ENCODE measurements at regions of chr2 and their contacts with region 1.

Region 1: GRCh38 chr2:203934041-203934492 is 2.5 kb upstream of the ICOS start:
- DNase-seq: peak; percentile 59
- H3K4me3 Mint-ChIP-seq: peak overlapping the region; percentile 61
- H3K27ac Mint-ChIP-seq: peak overlapping the region; percentile 87
- H3K4me1 Mint-ChIP-seq: peaks cover 44% of the 10 kb centered on the region
- H3K27me3 Mint-ChIP-seq: no peaks in the 10 kb centered on the region

Region 2: GRCh38 chr2:203730076-203730729 is 203.9 kb before region 1 on chr2:
- intact Hi-C with region 1: loop called (anchors 5 kb)
- DNase-seq: no peak
- H3K4me3 Mint-ChIP-seq: peak overlapping the region; percentile 1
- H3K27ac Mint-ChIP-seq: peak overlapping the region; percentile 83
- H3K4me1 Mint-ChIP-seq: peaks cover 75% of the 10 kb centered on the region
- H3K27me3 Mint-ChIP-seq: no peaks in the 10 kb centered on the region

Region 3: DNA sequence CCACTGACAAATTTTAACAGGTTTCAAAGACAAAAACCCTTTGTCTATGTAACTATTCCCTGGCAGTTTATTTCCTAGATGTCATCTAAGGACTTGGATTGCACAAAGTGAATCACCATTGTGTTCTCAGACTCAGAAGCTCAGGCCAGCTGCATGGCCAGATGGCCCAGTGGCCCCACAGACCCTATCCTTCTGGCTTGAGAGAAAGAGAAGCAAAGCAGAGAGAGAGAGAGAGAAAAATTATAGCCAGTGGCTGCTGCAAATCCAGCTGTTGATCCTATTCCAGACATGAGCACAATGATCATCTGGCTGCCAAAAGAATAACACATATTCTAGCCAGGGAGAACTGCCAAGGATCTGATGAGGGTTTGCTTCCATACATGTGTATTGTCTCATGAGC is 40.7 kb before region 1 on chr2:
- intact Hi-C with region 1: loop called (anchors 1 kb)
- DNase-seq: no peak
- H3K4me3 Mint-ChIP-seq: no peak overlapping the region
- H3K27ac Mint-ChIP-seq: peak overlapping the region; percentile 92
- H3K4me1 Mint-ChIP-seq: peaks cover 79% of the 10 kb centered on the region
- H3K27me3 Mint-ChIP-seq: no peaks in the 10 kb centered on the region

Region 4: DNA sequence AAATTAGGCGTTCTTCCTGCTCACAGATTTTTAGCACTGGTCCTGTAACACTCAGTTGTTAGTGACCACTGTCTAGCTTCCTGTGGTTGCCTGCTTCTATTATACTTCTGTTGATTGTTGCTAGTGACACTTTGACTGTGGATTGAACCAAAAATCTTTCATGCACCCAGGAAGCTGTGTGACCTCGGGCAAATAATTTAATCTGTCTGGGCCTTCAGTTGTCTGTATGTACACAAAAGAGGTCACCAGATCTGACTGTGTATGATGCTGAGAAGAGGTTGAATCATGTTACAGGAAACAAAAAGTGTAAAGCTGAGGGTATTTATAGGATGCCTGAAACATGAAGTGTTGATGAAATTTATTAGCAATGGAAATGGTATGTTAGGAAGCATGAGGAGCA is 15.2 kb after region 1 on chr2:
- intact Hi-C with region 1: loop called (anchors 1 kb)
- DNase-seq: no peak
- H3K4me3 Mint-ChIP-seq: peak overlapping the region; percentile 23
- H3K27ac Mint-ChIP-seq: peak overlapping the region; percentile 47
- H3K4me1 Mint-ChIP-seq: peaks cover 81% of the 10 kb centered on the region
- H3K27me3 Mint-ChIP-seq: no peaks in the 10 kb centered on the region

Region 5: GRCh38 chr2:203997980-203998809 is 64.1 kb after region 1 on chr2:
- intact Hi-C with region 1: loop called (anchors 1 kb)
- DNase-seq: no peak
- H3K4me3 Mint-ChIP-seq: peak overlapping the region; percentile 24
- H3K27ac Mint-ChIP-seq: peak overlapping the region; percentile 77
- H3K4me1 Mint-ChIP-seq: peaks cover 64% of the 10 kb centered on the region
- H3K27me3 Mint-ChIP-seq: no peaks in the 10 kb centered on the region

Region 6: GRCh38 chr2:204039298-204039838 is 105.3 kb after region 1 on chr2:
- intact Hi-C with region 1: no loop called
- DNase-seq: no peak
- H3K4me3 Mint-ChIP-seq: no peak overlapping the region
- H3K27ac Mint-ChIP-seq: no peak overlapping the region
- H3K4me1 Mint-ChIP-seq: peaks cover 2% of the 10 kb centered on the region
- H3K27me3 Mint-ChIP-seq: peaks cover 19% of the 10 kb centered on the region

Region 7: DNA sequence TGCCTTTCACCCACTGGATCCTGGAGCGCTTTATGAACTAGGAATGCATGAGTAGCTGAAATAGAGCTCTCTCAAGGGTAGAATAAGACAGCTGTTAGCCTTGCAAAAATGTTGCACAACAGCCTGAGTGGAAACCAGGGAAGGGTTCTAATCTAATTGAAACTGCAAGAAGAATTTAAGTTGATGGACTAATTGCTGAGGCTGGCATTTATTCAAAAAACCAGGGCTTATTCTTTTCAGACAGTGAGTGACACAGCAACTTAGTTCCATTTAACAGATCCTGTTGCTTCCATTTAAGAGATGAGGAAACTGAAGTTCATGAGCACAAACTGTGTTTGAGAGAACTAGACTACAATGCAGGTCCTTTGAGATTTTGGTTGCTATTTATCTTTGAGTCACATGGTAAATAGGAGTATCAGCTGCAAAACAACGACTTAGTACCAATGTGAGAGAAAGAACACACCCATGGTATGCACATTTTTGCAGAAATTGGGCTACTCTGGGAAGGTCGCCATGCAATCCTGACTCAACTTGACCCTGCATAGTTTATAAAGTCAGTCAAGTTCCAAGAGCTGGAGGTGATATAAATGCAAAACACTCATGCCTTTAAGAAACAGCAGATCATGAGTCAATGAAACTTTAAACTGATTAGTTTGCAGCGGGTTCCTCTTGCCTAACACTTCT is 534.8 kb after region 1 on chr2:
- intact Hi-C with region 1: no loop called
- DNase-seq: no peak
- H3K4me3 Mint-ChIP-seq: no peak overlapping the region
- H3K27ac Mint-ChIP-seq: no peak overlapping the region
- H3K4me1 Mint-ChIP-seq: no peaks in the 10 kb centered on the region
- H3K27me3 Mint-ChIP-seq: peaks cover 5% of the 10 kb centered on the region